Activated B cell treated with CpG ODN at 0.5 μM for 24 hours (primary cell): ENCODE measurements at regions of chr1 and their contacts with region 1.

Region 1: GRCh38 chr1:150141452-150141851 is 8.3 kb upstream of the PLEKHO1 start:
- DNase-seq: no peak
- ATAC-seq: no peak
- H3K4me3 Mint-ChIP-seq: no peak overlapping the region
- H3K27ac Mint-ChIP-seq: no peak overlapping the region
- H3K4me1 Mint-ChIP-seq: peaks cover 24% of the 10 kb centered on the region
- H3K27me3 Mint-ChIP-seq: no peaks in the 10 kb centered on the region
- CTCF ChIP-seq: no peak

Region 2: GRCh38 chr1:150093805-150094204 is 47.6 kb before region 1 on chr1:
- CTCF ChIA-PET with region 1: no interaction called
- POLR2A ChIA-PET with region 1: no interaction called
- intact Hi-C with region 1: no loop called
- DNase-seq: no peak
- ATAC-seq: no peak
- H3K4me3 Mint-ChIP-seq: no peak overlapping the region
- H3K27ac Mint-ChIP-seq: no peak overlapping the region
- H3K4me1 Mint-ChIP-seq: peaks cover 37% of the 10 kb centered on the region
- H3K27me3 Mint-ChIP-seq: no peaks in the 10 kb centered on the region
- CTCF ChIP-seq: no peak

Region 3: DNA sequence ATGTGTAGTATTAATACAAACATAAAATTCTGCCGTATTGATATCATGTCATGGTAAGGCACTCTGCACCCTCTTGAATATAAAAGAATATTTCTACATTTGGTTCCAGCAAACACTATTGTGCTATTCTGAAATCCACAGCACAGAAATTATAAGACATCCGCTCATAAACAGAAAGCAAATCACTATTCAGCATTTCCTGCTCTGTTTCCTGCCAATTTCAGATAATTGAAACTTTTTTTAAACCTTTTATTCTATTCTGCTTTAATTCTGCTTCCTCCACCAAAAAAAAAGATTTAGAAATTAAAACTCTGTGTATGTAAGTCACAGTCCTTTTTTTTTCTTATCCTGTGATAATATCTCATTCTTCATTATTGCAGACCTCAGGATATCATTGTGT is 31.3 kb before region 1 on chr1:
- CTCF ChIA-PET with region 1: no interaction called
- POLR2A ChIA-PET with region 1: interaction called, 10 read pairs
- intact Hi-C with region 1: no loop called
- DNase-seq: no peak
- ATAC-seq: no peak
- H3K4me3 Mint-ChIP-seq: peak overlapping the region; percentile 46
- H3K27ac Mint-ChIP-seq: peak overlapping the region; percentile 73
- H3K4me1 Mint-ChIP-seq: peaks cover 29% of the 10 kb centered on the region
- H3K27me3 Mint-ChIP-seq: no peaks in the 10 kb centered on the region
- CTCF ChIP-seq: no peak

Region 4: DNA sequence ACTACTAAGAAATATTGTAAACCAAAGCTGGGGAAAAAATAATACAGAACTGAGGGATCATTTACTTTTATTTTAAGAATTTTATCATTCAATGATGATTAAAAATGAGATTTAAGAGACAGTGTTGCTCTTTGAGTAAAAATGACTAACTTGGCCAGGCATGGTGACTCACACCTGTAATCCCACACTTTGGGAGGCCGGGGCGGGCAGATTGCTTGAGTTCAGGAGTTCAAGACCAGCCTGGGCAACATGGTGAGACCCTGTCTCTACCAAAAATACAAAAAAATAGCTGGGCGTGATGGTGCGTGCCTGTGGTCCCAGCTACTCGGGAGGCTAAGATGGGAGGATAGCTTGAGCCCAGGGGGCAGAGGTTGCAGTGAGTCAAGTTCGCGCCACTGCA is 13.6 kb before region 1 on chr1:
- CTCF ChIA-PET with region 1: no interaction called
- POLR2A ChIA-PET with region 1: interaction called, 3 read pairs
- intact Hi-C with region 1: loop called (anchors 1 kb)
- DNase-seq: no peak
- ATAC-seq: no peak
- H3K4me3 Mint-ChIP-seq: no peak overlapping the region
- H3K27ac Mint-ChIP-seq: no peak overlapping the region
- H3K4me1 Mint-ChIP-seq: peaks cover 14% of the 10 kb centered on the region
- H3K27me3 Mint-ChIP-seq: no peaks in the 10 kb centered on the region
- CTCF ChIP-seq: no peak

Region 5: GRCh38 chr1:150186789-150187559 is 45.5 kb after region 1 on chr1:
- CTCF ChIA-PET with region 1: no interaction called
- POLR2A ChIA-PET with region 1: no interaction called
- intact Hi-C with region 1: no loop called
- DNase-seq: peak; percentile 46
- ATAC-seq: peak; percentile 81
- H3K4me3 Mint-ChIP-seq: peak overlapping the region; percentile 73
- H3K27ac Mint-ChIP-seq: peak overlapping the region; percentile 89
- H3K4me1 Mint-ChIP-seq: peaks cover 13% of the 10 kb centered on the region
- H3K27me3 Mint-ChIP-seq: no peaks in the 10 kb centered on the region
- CTCF ChIP-seq: no peak